IMR-90 (cell line): ENCODE measurements at regions of chr9 and their contacts with region 1.

Region 1: DNA sequence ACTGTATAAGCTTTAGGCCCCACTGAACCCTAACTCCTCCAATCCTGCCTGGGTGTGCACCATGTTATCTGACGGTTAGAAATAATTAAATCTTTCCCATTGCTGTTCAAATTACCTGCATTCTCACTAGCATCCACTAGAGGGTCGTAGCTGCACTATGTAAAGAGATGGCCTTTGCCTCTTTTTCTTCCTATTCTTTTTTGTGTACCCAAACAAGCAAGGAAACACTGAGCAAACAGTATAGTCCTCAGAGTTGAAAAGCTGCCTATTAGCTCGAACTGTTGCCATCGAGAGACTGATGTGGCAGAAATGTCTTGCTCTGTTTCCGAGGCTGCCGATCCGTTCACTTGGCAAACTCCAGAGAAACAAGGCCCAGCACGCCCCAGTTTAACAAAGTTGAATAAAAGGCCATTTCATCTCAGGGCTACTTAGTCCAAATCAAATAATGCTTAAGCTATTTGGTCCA is 163.8 kb upstream of the TRPM3 start:
- DNase-seq: peak; percentile 54
- ATAC-seq: peak; percentile 91
- H3K4me3 ChIP-seq: no peak overlapping the region
- H3K27ac ChIP-seq: no peak overlapping the region
- H3K4me1 ChIP-seq: no peaks in the 10 kb centered on the region
- H3K27me3 ChIP-seq: no peaks in the 10 kb centered on the region
- CTCF ChIP-seq: peak; percentile 82
- POLR2A ChIP-seq: no peak
- RAD21 ChIP-seq: peak; percentile 77

Region 2: GRCh38 chr9:71048280-71048679 is 236.9 kb before region 1 on chr9:
- CTCF ChIA-PET with region 1: no interaction called
- POLR2A ChIA-PET with region 1: no interaction called
- dilution Hi-C with region 1: no loop called
- in situ Hi-C with region 1: no loop called
- intact Hi-C with region 1: no loop called
- DNase-seq: no peak
- ATAC-seq: no peak
- H3K4me3 ChIP-seq: no peak overlapping the region
- H3K27ac ChIP-seq: no peak overlapping the region
- H3K4me1 ChIP-seq: no peaks in the 10 kb centered on the region
- H3K27me3 ChIP-seq: no peaks in the 10 kb centered on the region; the same call in 1 of the 2 replicates
- CTCF ChIP-seq: no peak
- POLR2A ChIP-seq: no peak
- RAD21 ChIP-seq: no peak

Region 3: DNA sequence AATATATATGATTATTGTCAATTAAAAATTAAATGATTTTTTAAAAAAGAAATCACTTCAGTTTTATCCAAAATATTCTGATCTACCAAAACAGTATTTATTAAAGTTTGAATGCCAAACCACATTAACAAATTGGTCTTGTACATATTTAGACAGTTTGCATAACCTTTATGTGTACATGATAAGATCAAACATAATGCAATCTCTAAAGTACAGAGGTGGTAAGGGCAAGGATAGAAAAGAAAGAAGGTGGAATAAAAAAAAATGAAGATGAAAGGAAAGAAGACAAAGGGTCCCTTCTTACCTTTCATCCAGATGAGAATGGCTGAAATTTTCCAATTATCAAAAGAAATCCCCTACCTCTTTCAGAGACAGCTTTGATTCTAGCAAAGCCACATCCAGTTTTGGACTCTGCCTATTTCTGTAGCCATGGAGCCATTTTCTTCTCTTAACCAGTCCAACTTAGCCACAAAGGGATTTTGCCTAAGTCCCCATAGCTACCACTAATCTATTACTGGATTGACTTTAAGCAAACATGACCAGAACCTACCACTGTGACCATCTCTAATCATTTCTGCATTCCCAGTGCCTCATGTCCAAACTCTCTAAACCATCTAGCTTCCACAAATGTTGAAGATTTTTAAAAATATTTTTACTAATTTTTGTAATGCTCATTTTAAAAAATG is 30.5 kb before region 1 on chr9:
- CTCF ChIA-PET with region 1: no interaction called
- POLR2A ChIA-PET with region 1: no interaction called
- dilution Hi-C with region 1: no loop called
- in situ Hi-C with region 1: no loop called
- intact Hi-C with region 1: no loop called
- DNase-seq: no peak
- ATAC-seq: no peak
- H3K4me3 ChIP-seq: no peak overlapping the region
- H3K27ac ChIP-seq: no peak overlapping the region
- H3K4me1 ChIP-seq: no peaks in the 10 kb centered on the region
- H3K27me3 ChIP-seq: no peaks in the 10 kb centered on the region
- CTCF ChIP-seq: no peak
- POLR2A ChIP-seq: no peak
- RAD21 ChIP-seq: no peak

Region 4: GRCh38 chr9:71322311-71322710 is 37.1 kb after region 1 on chr9:
- CTCF ChIA-PET with region 1: no interaction called
- POLR2A ChIA-PET with region 1: no interaction called
- dilution Hi-C with region 1: no loop called
- in situ Hi-C with region 1: no loop called
- intact Hi-C with region 1: no loop called
- DNase-seq: no peak
- ATAC-seq: no peak
- H3K4me3 ChIP-seq: no peak overlapping the region
- H3K27ac ChIP-seq: no peak overlapping the region
- H3K4me1 ChIP-seq: no peaks in the 10 kb centered on the region
- H3K27me3 ChIP-seq: no peaks in the 10 kb centered on the region
- CTCF ChIP-seq: no peak
- POLR2A ChIP-seq: no peak
- RAD21 ChIP-seq: no peak

Region 5: GRCh38 chr9:71384352-71384751 is 99.1 kb after region 1 on chr9:
- CTCF ChIA-PET with region 1: no interaction called
- POLR2A ChIA-PET with region 1: no interaction called
- dilution Hi-C with region 1: no loop called
- in situ Hi-C with region 1: loop called (anchors 25 kb)
- intact Hi-C with region 1: no loop called
- DNase-seq: no peak
- ATAC-seq: no peak
- H3K4me3 ChIP-seq: no peak overlapping the region
- H3K27ac ChIP-seq: no peak overlapping the region
- H3K4me1 ChIP-seq: no peaks in the 10 kb centered on the region
- H3K27me3 ChIP-seq: no peaks in the 10 kb centered on the region
- CTCF ChIP-seq: no peak
- POLR2A ChIP-seq: no peak
- RAD21 ChIP-seq: no peak

Region 6: GRCh38 chr9:71446473-71447411 is 161.5 kb after region 1 on chr9:
- CTCF ChIA-PET with region 1: no interaction called
- POLR2A ChIA-PET with region 1: no interaction called
- dilution Hi-C with region 1: no loop called
- in situ Hi-C with region 1: no loop called
- intact Hi-C with region 1: no loop called
- DNase-seq: peak; percentile 46
- ATAC-seq: peak; percentile 91
- H3K4me3 ChIP-seq: peak overlapping the region; percentile 42
- H3K27ac ChIP-seq: no peak overlapping the region
- H3K4me1 ChIP-seq: no peaks in the 10 kb centered on the region
- H3K27me3 ChIP-seq: peaks cover 4% of the 10 kb centered on the region
- CTCF ChIP-seq: no peak
- POLR2A ChIP-seq: no peak
- RAD21 ChIP-seq: no peak